Panc1 (cell line): ENCODE measurements at regions of chr10 and their contacts with region 1.

Region 1: GRCh38 chr10:112140110-112140970 is 43.2 kb downstream of the GPAM start:
- DNase-seq: peak; percentile 50
- ATAC-seq: peak; percentile 96
- H3K4me3 ChIP-seq: no peak overlapping the region
- H3K27ac ChIP-seq: no peak overlapping the region
- H3K4me1 ChIP-seq: no peaks in the 10 kb centered on the region
- H3K27me3 ChIP-seq: no peaks in the 10 kb centered on the region
- CTCF ChIP-seq: peak; percentile 98

Region 2: DNA sequence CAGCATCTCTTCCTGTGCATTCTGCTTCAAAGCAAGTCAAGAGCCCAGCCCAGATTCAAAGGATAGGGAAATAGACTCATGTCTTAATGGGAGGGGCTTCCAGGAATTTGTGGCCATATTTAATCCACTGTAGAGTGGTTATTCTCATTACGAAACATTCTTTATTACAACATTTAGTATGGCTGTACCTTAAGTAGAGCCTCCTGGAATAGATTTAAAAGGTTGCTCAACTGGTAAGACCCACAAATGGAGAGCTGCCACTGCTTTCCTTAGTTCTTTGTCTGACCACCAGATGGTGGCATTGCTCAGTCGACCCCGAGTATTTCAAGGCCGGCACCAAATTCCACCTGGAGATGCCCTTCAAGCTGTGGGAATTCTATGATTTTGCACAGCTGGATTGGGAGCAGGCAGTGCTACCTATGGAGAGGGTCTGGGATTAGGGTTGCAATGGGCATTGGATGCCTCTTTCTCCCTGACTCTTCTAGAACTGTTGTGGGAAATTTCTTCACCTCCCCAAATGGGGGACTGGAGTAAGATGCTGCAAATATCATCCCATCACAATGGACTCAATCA is 1394.0 kb before region 1 on chr10:
- CTCF ChIA-PET with region 1: no interaction called
- POLR2A ChIA-PET with region 1: no interaction called
- in situ Hi-C with region 1: no loop called
- intact Hi-C with region 1: loop called (anchors 5 kb)
- DNase-seq: peak; percentile 72
- ATAC-seq: peak; percentile 93
- H3K4me3 ChIP-seq: no peak overlapping the region
- H3K27ac ChIP-seq: no peak overlapping the region
- H3K4me1 ChIP-seq: peaks cover 3% of the 10 kb centered on the region; the same call in 1 of the 2 replicates
- H3K27me3 ChIP-seq: peaks cover 7% of the 10 kb centered on the region; the same call in 1 of the 2 replicates
- CTCF ChIP-seq: peak; percentile 90

Region 3: DNA sequence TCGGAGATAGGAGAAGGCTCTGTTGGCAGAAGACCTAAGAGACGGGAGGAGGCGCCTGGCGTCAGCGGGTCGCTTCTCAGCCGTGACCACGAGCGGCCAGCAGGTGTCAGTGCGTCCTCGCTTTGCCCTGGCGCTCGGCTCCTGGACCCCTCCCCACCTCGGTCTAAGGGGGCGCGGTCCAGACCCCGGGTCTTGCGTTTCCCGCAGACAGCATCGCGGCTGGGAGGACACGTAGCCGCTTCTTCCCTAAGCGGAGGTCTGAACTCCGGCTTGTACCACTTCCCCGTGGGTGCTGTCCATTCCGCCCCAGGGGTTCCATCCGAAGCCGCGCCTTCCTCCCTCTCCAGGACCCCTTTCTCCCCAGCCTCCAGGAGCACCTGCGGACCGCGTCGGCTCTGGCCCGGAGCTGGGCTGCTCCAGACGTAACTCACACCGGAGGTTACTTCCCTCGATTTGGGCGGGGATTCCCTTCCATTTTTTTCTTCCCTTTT is 1064.1 kb before region 1 on chr10:
- CTCF ChIA-PET with region 1: no interaction called
- POLR2A ChIA-PET with region 1: no interaction called
- in situ Hi-C with region 1: no loop called
- intact Hi-C with region 1: loop called (anchors 10 kb)
- DNase-seq: peak; percentile 25
- ATAC-seq: peak; percentile 86
- H3K4me3 ChIP-seq: peak overlapping the region; percentile 43 to 64
- H3K27ac ChIP-seq: no peak overlapping the region
- H3K4me1 ChIP-seq: no peaks in the 10 kb centered on the region; the same call in 1 of the 2 replicates
- H3K27me3 ChIP-seq: peaks cover 31% of the 10 kb centered on the region
- CTCF ChIP-seq: peak; percentile 97

Region 4: GRCh38 chr10:111756217-111757061 is 383.9 kb before region 1 on chr10:
- CTCF ChIA-PET with region 1: interaction called, 11 read pairs
- POLR2A ChIA-PET with region 1: no interaction called
- in situ Hi-C with region 1: no loop called
- intact Hi-C with region 1: loop called (anchors 1 kb)
- DNase-seq: peak; percentile 48
- ATAC-seq: peak; percentile 74
- H3K4me3 ChIP-seq: peak overlapping the region in 1 of 2 experiments; percentile 2; a peak in 1 of 4 replicates
- H3K27ac ChIP-seq: no peak overlapping the region
- H3K4me1 ChIP-seq: no peaks in the 10 kb centered on the region
- H3K27me3 ChIP-seq: no peaks in the 10 kb centered on the region
- CTCF ChIP-seq: peak; percentile 70

Region 5: DNA sequence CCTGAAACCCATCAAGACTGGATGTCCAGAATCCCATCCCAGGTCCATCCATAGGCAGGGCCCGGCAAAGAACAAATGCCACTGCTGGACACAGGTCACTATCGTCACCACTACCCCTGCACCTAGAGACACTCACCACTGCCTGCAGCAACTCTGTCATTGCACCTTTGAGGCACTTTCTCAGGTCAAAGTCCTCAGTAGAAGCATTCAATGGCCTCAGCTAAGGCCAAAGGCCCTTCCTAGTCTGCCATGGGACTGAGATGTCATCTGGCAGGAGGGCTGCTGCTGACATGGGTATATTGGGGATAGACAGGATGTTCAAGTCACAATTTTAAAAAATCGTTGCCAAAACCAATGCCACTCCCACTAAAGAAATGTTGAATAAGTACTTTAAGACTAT is 15.5 kb before region 1 on chr10:
- CTCF ChIA-PET with region 1: interaction called, 12 read pairs
- POLR2A ChIA-PET with region 1: no interaction called
- in situ Hi-C with region 1: no loop called
- intact Hi-C with region 1: no loop called
- DNase-seq: no peak
- ATAC-seq: no peak
- H3K4me3 ChIP-seq: no peak overlapping the region
- H3K27ac ChIP-seq: no peak overlapping the region
- H3K4me1 ChIP-seq: no peaks in the 10 kb centered on the region
- H3K27me3 ChIP-seq: peaks cover 17% of the 10 kb centered on the region
- CTCF ChIP-seq: no peak

Region 6: DNA sequence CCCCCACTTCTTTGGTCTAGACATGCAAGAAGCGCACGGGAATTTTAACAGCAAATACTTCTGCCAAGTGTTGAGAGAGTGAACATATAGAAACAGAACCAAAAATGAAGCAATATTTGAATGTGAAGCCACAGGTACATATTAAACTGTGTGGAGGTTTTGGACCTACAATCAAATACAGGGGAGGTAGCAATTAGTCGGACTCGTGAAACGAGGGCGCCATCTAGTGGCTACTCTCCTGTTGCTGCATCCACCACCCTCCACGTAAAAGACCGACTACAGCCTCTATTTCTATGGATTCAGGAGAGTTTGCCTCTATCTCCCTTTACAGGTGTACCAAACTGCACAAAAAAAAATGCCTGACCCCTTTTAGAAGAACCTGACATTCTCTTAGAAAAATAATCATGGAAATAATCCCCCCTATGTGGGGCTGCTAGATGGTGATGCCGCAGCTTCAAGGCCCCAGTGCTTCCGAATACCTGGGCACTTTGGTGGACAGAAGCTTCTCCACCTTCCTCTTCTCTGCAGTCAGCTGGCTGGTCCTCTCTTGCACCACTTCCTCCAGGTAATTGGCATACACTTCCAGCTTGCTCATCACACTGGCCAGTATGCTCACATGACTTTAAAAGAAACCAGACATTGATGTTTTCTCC is 174.6 kb after region 1 on chr10:
- CTCF ChIA-PET with region 1: interaction called, 5 read pairs
- POLR2A ChIA-PET with region 1: no interaction called
- in situ Hi-C with region 1: no loop called
- intact Hi-C with region 1: loop called (anchors 2 kb)
- DNase-seq: peak; percentile 59
- ATAC-seq: peak; percentile 96
- H3K4me3 ChIP-seq: no peak overlapping the region
- H3K27ac ChIP-seq: no peak overlapping the region
- H3K4me1 ChIP-seq: no peaks in the 10 kb centered on the region
- H3K27me3 ChIP-seq: peaks cover 19% of the 10 kb centered on the region
- CTCF ChIP-seq: peak; percentile 97

Region 7: GRCh38 chr10:112434988-112435619 is 294.8 kb after region 1 on chr10:
- CTCF ChIA-PET with region 1: interaction called, 3 read pairs
- POLR2A ChIA-PET with region 1: no interaction called
- in situ Hi-C with region 1: no loop called
- intact Hi-C with region 1: loop called (anchors 10 kb)
- DNase-seq: no peak
- ATAC-seq: no peak
- H3K4me3 ChIP-seq: no peak overlapping the region
- H3K27ac ChIP-seq: no peak overlapping the region
- H3K4me1 ChIP-seq: no peaks in the 10 kb centered on the region
- H3K27me3 ChIP-seq: no peaks in the 10 kb centered on the region
- CTCF ChIP-seq: peak; percentile 44; the same call in 1 of the 2 replicates

Region 8: GRCh38 chr10:112565434-112566053 is 425.2 kb after region 1 on chr10:
- CTCF ChIA-PET with region 1: no interaction called
- POLR2A ChIA-PET with region 1: no interaction called
- in situ Hi-C with region 1: no loop called
- intact Hi-C with region 1: no loop called
- DNase-seq: peak; percentile 69
- ATAC-seq: peak; percentile 89
- H3K4me3 ChIP-seq: no peak overlapping the region
- H3K27ac ChIP-seq: no peak overlapping the region
- H3K4me1 ChIP-seq: peaks cover 14% of the 10 kb centered on the region; the same call in 1 of the 2 replicates
- H3K27me3 ChIP-seq: no peaks in the 10 kb centered on the region
- CTCF ChIP-seq: peak; percentile 85; the same call in 1 of the 2 replicates